Naive thymus-derived CD4-positive, alpha-beta T cell (primary cell): ENCODE measurements at regions of chr19 and their contacts with region 1.

Region 1: GRCh38 chr19:18919086-18919899 is at the starts of genes COPE and DDX49:
- DNase-seq: peak; percentile 85 to 99 (median 99)
- ATAC-seq: peak; percentile 97
- H3K4me3 ChIP-seq: peak within 1 kb of the TSS; percentile 85
- H3K4me3 Mint-ChIP-seq: peak within 1 kb of the TSS; percentile 71 to 100 (median 92)
- H3K27ac ChIP-seq: peak within 1 kb of the TSS; percentile 93
- H3K27ac Mint-ChIP-seq: peak within 1 kb of the TSS; percentile 76 to 98 (median 96)
- H3K4me1 ChIP-seq: peaks cover 18 to 21% of the 10 kb centered on the region in 2 donors
- H3K4me1 Mint-ChIP-seq: peaks cover 25 to 63% (median 36%) of the 10 kb centered on the region in 7 donors
- H3K27me3 ChIP-seq: no peaks in the 10 kb centered on the region
- H3K27me3 Mint-ChIP-seq: peaks cover 0 to 2% (median 0%) of the 10 kb centered on the region in 5 donors
- total RNA-seq, gene COPE: 124 to 283 (median 163) TPM
- total RNA-seq, gene DDX49: 36.4 to 63.2 (median 50.2) TPM

Region 2: GRCh38 chr19:18478569-18479311 is 440.6 kb before region 1 on chr19:
- CTCF ChIA-PET with region 1: no interaction called
- POLR2A ChIA-PET with region 1: no interaction called
- intact Hi-C with region 1: no loop called
- DNase-seq: peak in 1 of 9 donors; percentile 75
- ATAC-seq: peak; percentile 76
- H3K4me3 ChIP-seq: no peak overlapping the region
- H3K4me3 Mint-ChIP-seq: peak overlapping the region in 8 of 10 donors; percentile 47 to 79 (median 56)
- H3K27ac ChIP-seq: no peak overlapping the region
- H3K27ac Mint-ChIP-seq: peak overlapping the region; percentile 38 to 91 (median 69)
- H3K4me1 ChIP-seq: peaks cover 15 to 63% of the 10 kb centered on the region in 2 donors
- H3K4me1 Mint-ChIP-seq: peaks cover 52 to 80% (median 68%) of the 10 kb centered on the region in 7 donors
- H3K27me3 ChIP-seq: no peaks in the 10 kb centered on the region
- H3K27me3 Mint-ChIP-seq: no peaks in the 10 kb centered on the region

Region 3: DNA sequence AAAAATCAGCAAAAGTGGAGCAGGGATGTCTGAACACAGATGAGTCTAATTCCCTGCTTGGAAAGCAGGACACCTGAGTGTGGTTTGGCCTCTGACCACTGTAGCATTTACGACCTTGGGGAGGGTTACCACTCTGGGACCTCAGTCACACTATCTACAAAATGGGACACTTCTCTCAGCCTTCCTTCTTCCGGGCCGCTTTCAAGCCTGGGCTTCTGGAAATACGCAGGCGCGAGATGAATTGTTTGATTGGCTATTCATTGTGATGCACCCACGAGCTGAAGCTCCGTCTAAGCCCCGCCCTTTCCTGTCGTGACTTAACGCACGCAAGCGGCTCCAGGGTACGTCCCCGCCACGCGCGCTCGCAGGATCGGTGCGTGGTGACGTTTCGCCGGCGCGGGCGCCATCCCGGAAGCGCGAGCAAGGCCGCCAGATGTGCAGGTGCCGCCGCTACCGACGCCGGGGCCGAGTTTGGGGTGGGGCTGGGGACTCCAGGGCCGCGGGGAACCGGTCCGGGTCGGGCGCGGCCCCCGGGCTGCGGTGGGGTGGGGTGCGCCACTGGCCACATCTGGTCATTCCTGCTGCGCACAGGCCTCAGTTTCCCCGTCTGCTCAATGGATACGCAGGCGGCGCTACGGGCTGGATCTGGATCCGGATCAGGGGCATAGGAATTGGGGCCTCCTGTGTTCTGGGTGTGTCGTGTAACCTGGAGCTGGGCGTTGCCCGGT is 361.7 kb before region 1 on chr19 and contains the start of gene KXD1:
- CTCF ChIA-PET with region 1: no interaction called
- POLR2A ChIA-PET with region 1: interaction called, 9 read pairs
- intact Hi-C with region 1: loop called (anchors 1 kb)
- DNase-seq: peak; percentile 89 to 99 (median 97)
- ATAC-seq: peak; percentile 100
- H3K4me3 ChIP-seq: peak within 1 kb of the TSS; percentile 84
- H3K4me3 Mint-ChIP-seq: peak within 1 kb of the TSS; percentile 83 to 93 (median 91)
- H3K27ac ChIP-seq: peak within 1 kb of the TSS; percentile 95
- H3K27ac Mint-ChIP-seq: peak within 1 kb of the TSS; percentile 87 to 97 (median 96)
- H3K4me1 ChIP-seq: peaks cover 13 to 15% of the 10 kb centered on the region in 2 donors
- H3K4me1 Mint-ChIP-seq: peaks cover 6 to 25% (median 23%) of the 10 kb centered on the region in 7 donors
- H3K27me3 ChIP-seq: no peaks in the 10 kb centered on the region
- H3K27me3 Mint-ChIP-seq: no peaks in the 10 kb centered on the region
- total RNA-seq, gene KXD1: 74.7 to 108 (median 99.9) TPM

Region 4: DNA sequence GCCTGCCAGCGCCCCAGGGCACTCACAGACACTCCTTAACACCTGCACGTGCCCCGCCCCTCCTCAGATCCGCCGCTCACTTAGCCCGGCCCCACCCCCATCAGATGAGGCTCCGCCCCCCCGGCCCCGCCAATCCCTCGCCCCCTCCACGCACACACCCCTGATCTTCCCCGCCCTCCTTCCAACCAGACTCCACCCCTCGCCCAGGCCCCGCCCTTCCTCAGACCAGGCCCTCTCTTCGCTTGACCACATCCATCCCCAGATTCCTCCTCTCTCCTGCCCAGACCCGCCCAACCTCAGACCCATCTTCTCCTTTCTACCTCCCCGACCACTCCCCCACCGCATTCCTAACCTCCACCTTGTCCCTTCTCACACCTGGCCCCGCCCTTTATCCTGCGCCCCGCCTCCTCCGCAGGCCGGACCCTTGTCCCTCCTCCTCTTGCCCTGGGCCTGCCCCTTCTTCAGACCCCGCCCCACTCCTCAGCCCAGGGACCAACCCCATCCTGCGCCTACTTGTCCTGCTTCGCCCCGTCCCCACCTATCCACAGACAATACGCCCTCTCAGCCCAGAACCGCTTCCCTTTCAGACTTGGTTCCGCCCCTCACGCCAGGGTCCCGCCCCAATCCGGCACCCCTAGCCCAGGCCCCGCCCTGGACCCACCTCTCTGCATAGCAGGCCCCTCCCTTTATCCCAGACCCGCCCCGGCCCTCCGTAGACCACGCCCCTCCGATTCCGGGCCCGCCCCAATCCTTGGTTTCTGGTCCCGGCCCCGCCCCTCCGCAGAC is 282.9 kb before region 1 on chr19:
- CTCF ChIA-PET with region 1: no interaction called
- POLR2A ChIA-PET with region 1: interaction called, 3 read pairs
- intact Hi-C with region 1: loop called (anchors 1 kb)
- DNase-seq: peak; percentile 97 to 100 (median 98)
- ATAC-seq: peak; percentile 95
- H3K4me3 ChIP-seq: peak overlapping the region; percentile 77
- H3K4me3 Mint-ChIP-seq: peak overlapping the region; percentile 71 to 100 (median 88)
- H3K27ac ChIP-seq: peak overlapping the region; percentile 88
- H3K27ac Mint-ChIP-seq: peak overlapping the region; percentile 70 to 96 (median 87)
- H3K4me1 ChIP-seq: peaks cover 6 to 19% of the 10 kb centered on the region in 2 donors
- H3K4me1 Mint-ChIP-seq: peaks cover 23 to 48% (median 36%) of the 10 kb centered on the region in 7 donors
- H3K27me3 ChIP-seq: no peaks in the 10 kb centered on the region
- H3K27me3 Mint-ChIP-seq: peaks cover 0 to 18% (median 3%) of the 10 kb centered on the region in 5 donors

Region 5: DNA sequence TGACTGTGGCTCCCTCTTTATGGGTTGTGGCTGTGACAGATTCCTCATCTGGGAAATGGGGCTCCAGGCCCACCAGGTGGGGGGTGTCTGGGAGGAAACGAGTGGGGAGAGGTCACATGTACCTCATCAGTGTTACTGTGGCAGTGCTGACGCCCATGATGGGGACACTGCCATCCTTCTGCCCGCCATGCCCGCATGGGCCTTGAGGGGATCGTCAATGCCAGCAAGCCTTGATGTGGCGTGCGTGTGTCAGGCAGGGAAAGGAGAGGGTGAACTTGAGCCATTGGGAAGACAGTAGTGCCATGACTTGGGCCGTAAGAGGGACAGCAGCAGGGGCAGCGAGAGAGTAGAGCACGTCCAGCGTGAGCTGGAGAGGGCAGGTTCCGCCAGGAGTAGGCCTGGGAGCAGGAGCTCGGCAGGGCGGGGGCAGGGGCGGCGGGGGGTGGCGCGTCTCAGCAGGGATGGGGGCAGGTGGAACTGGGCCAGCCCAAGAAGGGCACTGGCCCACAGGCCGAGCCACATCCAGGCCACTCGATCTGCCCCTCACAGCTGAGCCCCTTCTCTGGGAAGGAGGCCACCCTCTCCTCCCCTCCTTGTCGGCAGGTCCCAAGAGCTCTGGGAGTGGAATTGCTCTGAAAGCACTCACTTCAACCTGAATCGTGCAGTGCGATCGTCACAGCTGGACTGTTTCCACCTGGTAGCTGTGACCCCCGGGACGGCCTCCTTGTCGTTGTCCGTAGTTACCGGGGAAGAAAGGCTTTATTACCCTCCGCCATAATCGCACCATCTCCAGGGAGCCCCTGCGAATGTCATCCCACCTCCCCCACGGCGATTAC is 272.5 kb before region 1 on chr19:
- CTCF ChIA-PET with region 1: no interaction called
- POLR2A ChIA-PET with region 1: no interaction called
- intact Hi-C with region 1: no loop called
- DNase-seq: no peak
- ATAC-seq: no peak
- H3K4me3 ChIP-seq: no peak overlapping the region
- H3K4me3 Mint-ChIP-seq: no peak overlapping the region
- H3K27ac ChIP-seq: no peak overlapping the region
- H3K27ac Mint-ChIP-seq: no peak overlapping the region
- H3K4me1 ChIP-seq: no peaks in the 10 kb centered on the region
- H3K4me1 Mint-ChIP-seq: peaks cover 10 to 45% (median 31%) of the 10 kb centered on the region in 7 donors
- H3K27me3 ChIP-seq: no peaks in the 10 kb centered on the region
- H3K27me3 Mint-ChIP-seq: no peaks in the 10 kb centered on the region

Region 6: GRCh38 chr19:18831524-18832305 is 87.6 kb before region 1 on chr19 and contains the start of gene UPF1:
- CTCF ChIA-PET with region 1: no interaction called
- POLR2A ChIA-PET with region 1: interaction called, 8 read pairs
- intact Hi-C with region 1: loop called (anchors 1 kb)
- DNase-seq: peak; percentile 92 to 99 (median 96)
- ATAC-seq: peak; percentile 93
- H3K4me3 ChIP-seq: peak within 1 kb of the TSS; percentile 95
- H3K4me3 Mint-ChIP-seq: peak within 1 kb of the TSS; percentile 89 to 97 (median 92)
- H3K27ac ChIP-seq: peak within 1 kb of the TSS; percentile 90
- H3K27ac Mint-ChIP-seq: peak within 1 kb of the TSS; percentile 83 to 96 (median 90)
- H3K4me1 ChIP-seq: peaks cover 17 to 23% of the 10 kb centered on the region in 2 donors
- H3K4me1 Mint-ChIP-seq: peaks cover 36 to 42% (median 39%) of the 10 kb centered on the region in 7 donors
- H3K27me3 ChIP-seq: no peaks in the 10 kb centered on the region
- H3K27me3 Mint-ChIP-seq: peaks cover 0 to 18% (median 6%) of the 10 kb centered on the region in 5 donors
- total RNA-seq, gene UPF1: 98.7 to 148 (median 113) TPM

Region 7: DNA sequence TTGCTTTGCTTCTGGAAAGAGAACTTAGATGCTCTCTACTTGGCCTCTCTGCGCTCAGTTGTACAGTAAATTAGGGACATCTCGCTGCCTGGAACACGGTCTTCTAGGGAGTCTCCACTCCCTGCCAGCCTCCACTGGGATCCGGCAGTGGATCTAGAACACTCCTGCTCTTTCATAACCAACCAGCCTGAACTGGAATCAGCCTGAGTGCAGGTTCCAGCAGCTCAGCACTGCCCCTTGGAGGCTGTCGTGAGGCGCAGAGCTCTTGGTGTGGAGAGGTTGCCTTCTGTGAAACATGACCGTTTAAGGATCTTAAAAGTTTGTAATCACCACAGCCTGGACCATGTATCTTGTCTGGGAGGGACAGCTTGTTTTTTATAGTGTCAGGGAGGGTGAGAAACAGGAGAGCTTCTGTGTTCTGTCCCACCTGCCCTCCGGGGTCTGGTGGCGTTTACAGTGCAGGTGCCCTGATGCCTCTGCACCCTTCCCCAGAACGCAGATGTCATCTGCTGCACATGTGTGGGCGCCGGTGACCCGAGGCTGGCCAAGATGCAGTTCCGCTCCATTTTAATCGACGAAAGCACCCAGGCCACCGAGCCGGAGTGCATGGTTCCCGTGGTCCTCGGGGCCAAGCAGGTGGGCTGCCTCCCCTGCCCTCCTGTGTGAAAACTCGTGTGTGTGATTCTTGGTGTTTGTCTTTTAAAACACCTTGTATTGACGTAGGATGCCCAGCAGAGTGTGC is 62.7 kb before region 1 on chr19:
- CTCF ChIA-PET with region 1: no interaction called
- POLR2A ChIA-PET with region 1: no interaction called
- intact Hi-C with region 1: no loop called
- DNase-seq: no peak
- ATAC-seq: peak; percentile 22
- H3K4me3 ChIP-seq: no peak overlapping the region
- H3K4me3 Mint-ChIP-seq: no peak overlapping the region
- H3K27ac ChIP-seq: no peak overlapping the region
- H3K27ac Mint-ChIP-seq: peak overlapping the region in 1 of 9 donors; percentile 38
- H3K4me1 ChIP-seq: no peaks in the 10 kb centered on the region
- H3K4me1 Mint-ChIP-seq: no peaks in the 10 kb centered on the region
- H3K27me3 ChIP-seq: no peaks in the 10 kb centered on the region
- H3K27me3 Mint-ChIP-seq: no peaks in the 10 kb centered on the region

Region 8: DNA sequence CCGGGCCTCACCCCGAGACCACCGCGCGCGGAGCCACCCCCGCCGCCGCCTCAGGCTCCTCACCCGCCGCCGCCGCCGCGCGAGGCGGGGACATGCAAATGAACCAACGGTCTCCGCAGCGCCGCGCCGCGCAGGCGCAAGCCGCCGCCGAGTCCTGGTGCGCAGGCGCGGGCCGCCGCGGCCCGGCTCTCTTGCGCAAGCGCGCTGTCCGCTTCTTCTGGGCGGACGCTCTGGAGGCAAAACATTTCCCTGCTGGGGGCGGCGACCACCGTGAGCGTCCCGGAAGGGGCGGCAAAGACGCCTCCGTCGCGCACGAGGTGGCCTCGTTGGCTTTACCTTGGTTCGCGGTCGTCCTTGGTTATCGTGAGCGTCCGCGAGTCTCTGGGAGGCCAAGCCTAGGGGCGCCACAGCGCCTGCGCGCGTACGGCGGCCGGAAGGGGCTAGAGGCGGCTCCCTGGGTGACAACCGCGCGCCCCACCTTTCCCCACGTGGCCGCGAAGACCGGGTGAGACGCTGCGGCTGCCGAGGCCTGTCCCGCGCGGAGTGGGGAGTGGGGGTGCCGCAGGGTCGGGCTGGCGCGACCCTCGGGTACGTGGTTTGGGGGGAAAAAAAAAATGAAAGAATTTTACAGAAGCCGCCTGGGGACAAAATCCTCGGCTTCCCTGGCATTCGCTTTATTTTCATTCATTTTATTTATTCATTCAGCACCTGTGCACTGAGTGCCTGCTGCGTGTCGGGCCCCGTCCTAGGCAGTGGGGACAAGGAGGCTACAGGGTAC is 114.3 kb after region 1 on chr19 and contains the starts of genes ARMC6 and SUGP2:
- CTCF ChIA-PET with region 1: no interaction called
- POLR2A ChIA-PET with region 1: no interaction called
- intact Hi-C with region 1: loop called (anchors 1 kb)
- DNase-seq: peak; percentile 84 to 96 (median 94)
- ATAC-seq: peak; percentile 87
- H3K4me3 ChIP-seq: peak within 1 kb of the TSS; percentile 84
- H3K4me3 Mint-ChIP-seq: peak within 1 kb of the TSS; percentile 88 to 100 (median 96)
- H3K27ac ChIP-seq: peak within 1 kb of the TSS; percentile 86
- H3K27ac Mint-ChIP-seq: peak within 1 kb of the TSS; percentile 86 to 100 (median 94)
- H3K4me1 ChIP-seq: peaks cover 14 to 16% of the 10 kb centered on the region in 2 donors
- H3K4me1 Mint-ChIP-seq: peaks cover 16 to 40% (median 36%) of the 10 kb centered on the region in 7 donors
- H3K27me3 ChIP-seq: no peaks in the 10 kb centered on the region
- H3K27me3 Mint-ChIP-seq: no peaks in the 10 kb centered on the region
- total RNA-seq, gene ARMC6: 14.0 to 32.6 (median 15.0) TPM
- total RNA-seq, gene SUGP2: 116 to 145 (median 129) TPM

Region 9: DNA sequence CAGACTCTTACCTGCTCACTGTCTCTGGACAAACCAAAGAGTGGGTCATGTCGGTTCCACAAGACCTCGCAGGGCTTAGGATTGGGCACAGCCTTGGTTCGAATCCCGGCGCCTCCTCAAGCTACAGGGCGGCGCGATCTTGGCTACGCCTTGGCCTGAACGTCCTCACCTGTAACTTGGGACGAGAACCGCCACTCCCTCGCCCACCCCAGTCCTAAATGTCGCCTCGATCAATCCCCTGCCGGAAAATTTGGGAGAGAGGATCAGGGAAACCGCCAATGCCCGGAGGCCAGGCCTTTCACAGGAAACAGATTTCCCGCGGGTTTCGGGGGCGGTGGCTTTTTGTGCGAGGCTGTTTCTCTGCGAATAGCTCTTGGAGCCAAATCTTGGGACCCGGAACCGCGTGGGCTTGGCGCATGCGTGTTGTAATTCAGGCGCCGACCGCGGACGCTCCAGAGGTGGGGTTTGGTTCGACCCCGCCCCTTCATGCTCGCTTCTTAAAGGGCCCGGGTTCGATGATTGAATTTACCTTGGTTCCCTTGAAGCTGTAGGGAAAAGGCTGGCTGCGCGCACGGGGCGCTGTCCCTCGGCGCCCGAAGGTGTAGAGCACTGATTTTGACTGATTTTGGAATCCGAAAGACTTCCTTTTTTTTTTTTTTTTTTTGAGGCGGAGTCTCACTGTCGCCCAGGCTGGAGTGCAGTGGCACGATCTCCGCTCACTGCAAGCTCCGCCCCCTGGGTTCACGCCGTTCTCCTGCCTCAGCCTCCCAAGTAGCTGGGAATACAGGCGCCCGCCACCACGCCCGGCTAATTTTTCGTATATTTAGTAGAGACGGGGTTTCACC is 283.9 kb after region 1 on chr19 and contains the start of gene NR2C2AP:
- CTCF ChIA-PET with region 1: no interaction called
- POLR2A ChIA-PET with region 1: interaction called, 3 read pairs
- intact Hi-C with region 1: loop called in 1 of 2 experiments (anchors 1 kb)
- DNase-seq: peak; percentile 80 to 94 (median 89)
- ATAC-seq: peak; percentile 95
- H3K4me3 ChIP-seq: peak within 1 kb of the TSS; percentile 95
- H3K4me3 Mint-ChIP-seq: peak within 1 kb of the TSS; percentile 90 to 94 (median 92)
- H3K27ac ChIP-seq: peak within 1 kb of the TSS; percentile 89
- H3K27ac Mint-ChIP-seq: peak within 1 kb of the TSS; percentile 88 to 96 (median 93)
- H3K4me1 ChIP-seq: peaks cover 23% of the 10 kb centered on the region in 2 donors
- H3K4me1 Mint-ChIP-seq: peaks cover 22 to 36% (median 30%) of the 10 kb centered on the region in 7 donors
- H3K27me3 ChIP-seq: no peaks in the 10 kb centered on the region
- H3K27me3 Mint-ChIP-seq: peaks cover 0 to 12% (median 0%) of the 10 kb centered on the region in 5 donors
- total RNA-seq, gene NR2C2AP: 13.8 to 33.4 (median 28.7) TPM

Region 10: DNA sequence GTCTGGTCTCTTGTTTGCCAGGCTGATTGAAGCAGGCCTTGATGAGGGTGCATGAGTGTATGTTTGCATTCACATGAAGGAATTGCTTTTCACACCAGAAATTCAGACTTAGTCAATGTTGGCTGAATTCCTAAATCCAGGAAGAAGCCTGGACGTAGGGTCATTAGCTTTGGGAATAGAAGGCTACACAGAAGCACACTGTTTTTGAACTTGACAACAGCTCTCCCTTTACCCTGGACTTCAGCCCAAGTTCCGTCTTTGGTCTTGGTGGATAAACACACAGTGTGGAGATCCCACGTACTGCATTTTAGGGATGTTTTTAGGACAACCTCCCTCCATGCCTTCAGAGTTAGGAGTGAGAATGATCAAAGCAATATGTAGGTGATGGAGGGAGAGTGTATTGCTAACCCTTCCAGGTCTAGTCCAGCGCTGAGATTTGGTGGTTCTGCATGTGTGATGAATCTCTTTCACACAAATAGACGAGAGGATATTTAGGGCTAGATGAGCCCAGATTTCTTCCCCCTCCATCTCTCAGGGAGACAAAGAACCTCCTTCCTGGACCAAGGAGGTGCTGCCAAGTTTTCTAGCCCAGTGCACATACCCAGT is 331.0 kb after region 1 on chr19:
- CTCF ChIA-PET with region 1: no interaction called
- POLR2A ChIA-PET with region 1: no interaction called
- intact Hi-C with region 1: no loop called
- DNase-seq: no peak
- ATAC-seq: no peak
- H3K4me3 ChIP-seq: no peak overlapping the region
- H3K4me3 Mint-ChIP-seq: no peak overlapping the region
- H3K27ac ChIP-seq: no peak overlapping the region
- H3K27ac Mint-ChIP-seq: no peak overlapping the region
- H3K4me1 ChIP-seq: no peaks in the 10 kb centered on the region
- H3K4me1 Mint-ChIP-seq: no peaks in the 10 kb centered on the region
- H3K27me3 ChIP-seq: no peaks in the 10 kb centered on the region
- H3K27me3 Mint-ChIP-seq: peaks cover 27 to 42% (median 33%) of the 10 kb centered on the region in 5 donors